ENCODE measurements at regions of chr13 and their contacts with region 1.

Region 1: GRCh38 chr13:38398711-38399493 is 49.3 kb downstream of the UFM1 start:
- DNase-seq: no peak
- H3K4me3 ChIP-seq: no peak overlapping the region
- H3K4me3 Mint-ChIP-seq: no peak overlapping the region
- H3K27ac Mint-ChIP-seq: no peak overlapping the region
- H3K4me1 ChIP-seq: peaks cover 10% of the 10 kb centered on the region
- H3K4me1 Mint-ChIP-seq: peaks cover 30% of the 10 kb centered on the region
- H3K27me3 ChIP-seq: no peaks in the 10 kb centered on the region
- H3K27me3 Mint-ChIP-seq: no peaks in the 10 kb centered on the region
- CTCF ChIP-seq: no peak

Region 2: DNA sequence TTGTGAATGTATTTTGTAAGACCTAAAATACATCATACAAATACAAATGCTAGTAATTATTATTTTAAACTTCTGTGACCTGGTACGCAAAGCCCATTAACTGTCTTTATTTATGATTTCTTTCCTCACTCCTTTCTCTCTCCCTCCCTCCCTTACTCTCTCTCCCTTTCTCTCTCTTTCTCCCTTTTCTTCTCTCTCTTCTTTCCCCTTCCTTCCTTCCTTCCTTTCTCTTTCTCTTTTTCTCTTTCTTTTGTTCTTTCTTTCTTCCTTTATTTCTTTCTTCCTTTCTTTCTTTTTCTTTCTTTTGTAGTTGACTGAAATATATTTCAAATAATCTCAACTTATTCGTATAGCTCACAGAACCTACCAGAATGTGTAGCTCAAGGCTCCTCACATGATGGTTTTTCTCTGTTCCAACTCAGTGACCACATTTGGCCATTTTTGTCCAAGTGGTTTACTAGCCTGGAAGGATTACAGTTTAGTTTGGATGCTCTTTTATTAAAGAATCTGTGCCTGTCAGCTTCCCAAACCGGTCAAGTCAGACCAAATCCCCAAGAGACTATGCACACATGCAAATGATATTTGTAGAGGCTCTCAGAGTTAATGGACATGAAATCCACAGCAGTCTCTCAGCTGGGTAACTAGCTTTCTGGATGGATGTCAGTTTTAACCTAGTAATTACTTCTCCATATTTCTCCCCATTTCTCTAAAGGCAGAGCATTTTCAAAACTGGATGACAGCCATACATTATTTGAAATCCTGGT is 872.0 kb before region 1 on chr13:
- CTCF ChIA-PET with region 1: no interaction called
- POLR2A ChIA-PET with region 1: no interaction called
- intact Hi-C with region 1: no loop called
- DNase-seq: no peak
- H3K4me3 ChIP-seq: no peak overlapping the region
- H3K4me3 Mint-ChIP-seq: no peak overlapping the region
- H3K27ac Mint-ChIP-seq: no peak overlapping the region
- H3K4me1 ChIP-seq: no peaks in the 10 kb centered on the region
- H3K4me1 Mint-ChIP-seq: no peaks in the 10 kb centered on the region
- H3K27me3 ChIP-seq: no peaks in the 10 kb centered on the region
- H3K27me3 Mint-ChIP-seq: no peaks in the 10 kb centered on the region
- CTCF ChIP-seq: no peak

Region 3: GRCh38 chr13:38338089-38338488 is 60.8 kb before region 1 on chr13:
- CTCF ChIA-PET with region 1: no interaction called
- POLR2A ChIA-PET with region 1: no interaction called
- intact Hi-C with region 1: no loop called
- DNase-seq: no peak
- H3K4me3 ChIP-seq: no peak overlapping the region
- H3K4me3 Mint-ChIP-seq: no peak overlapping the region
- H3K27ac Mint-ChIP-seq: no peak overlapping the region
- H3K4me1 ChIP-seq: no peaks in the 10 kb centered on the region
- H3K4me1 Mint-ChIP-seq: peaks cover 16% of the 10 kb centered on the region
- H3K27me3 ChIP-seq: no peaks in the 10 kb centered on the region
- H3K27me3 Mint-ChIP-seq: no peaks in the 10 kb centered on the region
- CTCF ChIP-seq: no peak

Region 4: GRCh38 chr13:38349390-38350113 is 49.4 kb before region 1 on chr13 and contains the start of gene UFM1:
- CTCF ChIA-PET with region 1: interaction called, 3 read pairs
- POLR2A ChIA-PET with region 1: no interaction called
- intact Hi-C with region 1: loop called (anchors 1 kb)
- DNase-seq: peak; percentile 91 to 95
- H3K4me3 ChIP-seq: peak within 1 kb of the TSS; percentile 88
- H3K4me3 Mint-ChIP-seq: peak within 1 kb of the TSS; percentile 89
- H3K27ac Mint-ChIP-seq: peak within 1 kb of the TSS; percentile 93
- H3K4me1 ChIP-seq: peaks cover 22% of the 10 kb centered on the region
- H3K4me1 Mint-ChIP-seq: peaks cover 34% of the 10 kb centered on the region
- H3K27me3 ChIP-seq: no peaks in the 10 kb centered on the region
- H3K27me3 Mint-ChIP-seq: no peaks in the 10 kb centered on the region
- CTCF ChIP-seq: no peak
- total RNA-seq, gene UFM1: 98.3 and 106 TPM in 2 replicates

Region 5: GRCh38 chr13:38372814-38373375 is 26.0 kb before region 1 on chr13:
- CTCF ChIA-PET with region 1: interaction called, 3 read pairs
- POLR2A ChIA-PET with region 1: no interaction called
- intact Hi-C with region 1: loop called (anchors 1 kb)
- DNase-seq: peak in 1 of 2 experiments; percentile 48
- H3K4me3 ChIP-seq: no peak overlapping the region
- H3K4me3 Mint-ChIP-seq: peak overlapping the region; percentile 32
- H3K27ac Mint-ChIP-seq: peak overlapping the region; percentile 62
- H3K4me1 ChIP-seq: peaks cover 19% of the 10 kb centered on the region
- H3K4me1 Mint-ChIP-seq: peaks cover 26% of the 10 kb centered on the region
- H3K27me3 ChIP-seq: no peaks in the 10 kb centered on the region
- H3K27me3 Mint-ChIP-seq: no peaks in the 10 kb centered on the region
- CTCF ChIP-seq: no peak

Region 6: GRCh38 chr13:38409771-38410170 is 10.9 kb after region 1 on chr13:
- CTCF ChIA-PET with region 1: no interaction called
- POLR2A ChIA-PET with region 1: no interaction called
- intact Hi-C with region 1: loop called (anchors 2 kb)
- DNase-seq: peak in 1 of 2 experiments; percentile 21
- H3K4me3 ChIP-seq: no peak overlapping the region
- H3K4me3 Mint-ChIP-seq: no peak overlapping the region
- H3K27ac Mint-ChIP-seq: no peak overlapping the region
- H3K4me1 ChIP-seq: no peaks in the 10 kb centered on the region
- H3K4me1 Mint-ChIP-seq: no peaks in the 10 kb centered on the region
- H3K27me3 ChIP-seq: no peaks in the 10 kb centered on the region
- H3K27me3 Mint-ChIP-seq: no peaks in the 10 kb centered on the region
- CTCF ChIP-seq: no peak

Region 7: DNA sequence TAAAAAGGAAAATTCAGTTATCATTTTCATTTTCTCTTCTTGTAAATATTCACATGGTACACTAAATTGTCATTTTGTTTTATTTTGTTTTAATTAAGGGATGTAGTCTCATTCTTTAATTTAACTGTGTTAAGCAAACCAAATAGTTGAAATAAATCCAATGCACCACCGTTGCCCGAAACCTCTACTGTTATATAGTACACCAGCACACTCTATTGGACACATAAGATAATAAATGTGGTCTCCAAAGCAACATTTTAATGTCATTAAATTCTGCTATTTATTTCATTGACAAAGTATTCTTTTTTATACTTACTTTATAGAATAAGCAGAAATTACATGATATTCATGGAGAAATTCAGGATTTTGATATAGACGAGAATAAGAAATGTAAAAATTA is 131.6 kb after region 1 on chr13:
- CTCF ChIA-PET with region 1: no interaction called
- POLR2A ChIA-PET with region 1: no interaction called
- intact Hi-C with region 1: loop called (anchors 5 kb)
- DNase-seq: no peak
- H3K4me3 ChIP-seq: no peak overlapping the region
- H3K4me3 Mint-ChIP-seq: no peak overlapping the region
- H3K27ac Mint-ChIP-seq: no peak overlapping the region
- H3K4me1 ChIP-seq: no peaks in the 10 kb centered on the region
- H3K4me1 Mint-ChIP-seq: peaks cover 10% of the 10 kb centered on the region
- H3K27me3 ChIP-seq: no peaks in the 10 kb centered on the region; the same call in 1 of the 2 replicates
- H3K27me3 Mint-ChIP-seq: no peaks in the 10 kb centered on the region
- CTCF ChIP-seq: peak; percentile 32 to 52

Region 8: GRCh38 chr13:38636772-38637171 is 237.9 kb after region 1 on chr13:
- CTCF ChIA-PET with region 1: no interaction called
- POLR2A ChIA-PET with region 1: no interaction called
- intact Hi-C with region 1: loop called (anchors 2 kb)
- DNase-seq: peak; percentile 77 to 84
- H3K4me3 ChIP-seq: no peak overlapping the region
- H3K4me3 Mint-ChIP-seq: peak overlapping the region; percentile 56
- H3K27ac Mint-ChIP-seq: peak overlapping the region; percentile 49
- H3K4me1 ChIP-seq: peaks cover 54% of the 10 kb centered on the region
- H3K4me1 Mint-ChIP-seq: peaks cover 47% of the 10 kb centered on the region
- H3K27me3 ChIP-seq: no peaks in the 10 kb centered on the region
- H3K27me3 Mint-ChIP-seq: no peaks in the 10 kb centered on the region
- CTCF ChIP-seq: no peak

Region 9: DNA sequence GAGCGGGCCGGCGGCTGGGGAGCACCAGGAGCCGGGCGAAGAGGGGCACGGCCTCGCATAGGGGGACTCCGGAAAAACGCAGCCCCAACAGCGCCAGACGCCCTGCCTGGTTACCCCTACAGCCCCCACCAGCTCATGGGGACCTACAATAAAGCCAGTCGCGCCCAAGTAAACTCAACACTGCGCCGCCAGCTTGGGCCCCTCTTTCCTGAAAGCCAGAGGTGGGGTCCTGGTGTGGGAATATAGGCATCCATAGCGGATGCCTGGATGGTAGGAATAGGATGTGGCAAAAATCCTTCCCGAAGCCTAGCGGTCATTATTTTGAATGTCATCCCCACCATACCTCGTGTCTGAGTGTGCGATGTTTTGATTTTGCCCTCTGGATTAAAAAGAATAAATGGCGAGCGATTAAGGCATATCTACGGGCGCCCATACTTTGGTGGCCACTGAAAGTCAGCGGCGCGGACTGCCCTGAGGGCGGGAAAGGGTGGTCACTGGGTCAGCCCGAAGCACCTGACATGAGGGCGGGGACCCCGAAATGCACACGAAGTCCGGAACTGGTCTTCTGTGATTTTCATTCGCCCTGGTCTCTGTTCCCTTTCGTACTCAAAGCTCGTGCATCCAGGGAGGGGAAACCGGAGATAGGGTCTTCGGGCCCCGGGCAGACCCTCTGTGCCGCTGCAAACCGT is 639.1 kb after region 1 on chr13 and contains the starts of genes NHLRC3 and PROSER1:
- CTCF ChIA-PET with region 1: no interaction called
- POLR2A ChIA-PET with region 1: no interaction called
- intact Hi-C with region 1: loop called (anchors 5 kb)
- DNase-seq: peak; percentile 93 to 97
- H3K4me3 ChIP-seq: peak within 1 kb of the TSS; percentile 84
- H3K4me3 Mint-ChIP-seq: peak within 1 kb of the TSS; percentile 94
- H3K27ac Mint-ChIP-seq: peak within 1 kb of the TSS; percentile 84
- H3K4me1 ChIP-seq: peaks cover 10% of the 10 kb centered on the region; the same call in 1 of the 2 replicates
- H3K4me1 Mint-ChIP-seq: peaks cover 13% of the 10 kb centered on the region
- H3K27me3 ChIP-seq: no peaks in the 10 kb centered on the region
- H3K27me3 Mint-ChIP-seq: no peaks in the 10 kb centered on the region
- CTCF ChIP-seq: no peak
- total RNA-seq, gene NHLRC3: 35.8 and 38.1 TPM in 2 replicates
- total RNA-seq, gene PROSER1: 75.6 and 85.0 TPM in 2 replicates